ENCODE measurements at regions of chrX and their contacts with region 1.

Region 1: DNA sequence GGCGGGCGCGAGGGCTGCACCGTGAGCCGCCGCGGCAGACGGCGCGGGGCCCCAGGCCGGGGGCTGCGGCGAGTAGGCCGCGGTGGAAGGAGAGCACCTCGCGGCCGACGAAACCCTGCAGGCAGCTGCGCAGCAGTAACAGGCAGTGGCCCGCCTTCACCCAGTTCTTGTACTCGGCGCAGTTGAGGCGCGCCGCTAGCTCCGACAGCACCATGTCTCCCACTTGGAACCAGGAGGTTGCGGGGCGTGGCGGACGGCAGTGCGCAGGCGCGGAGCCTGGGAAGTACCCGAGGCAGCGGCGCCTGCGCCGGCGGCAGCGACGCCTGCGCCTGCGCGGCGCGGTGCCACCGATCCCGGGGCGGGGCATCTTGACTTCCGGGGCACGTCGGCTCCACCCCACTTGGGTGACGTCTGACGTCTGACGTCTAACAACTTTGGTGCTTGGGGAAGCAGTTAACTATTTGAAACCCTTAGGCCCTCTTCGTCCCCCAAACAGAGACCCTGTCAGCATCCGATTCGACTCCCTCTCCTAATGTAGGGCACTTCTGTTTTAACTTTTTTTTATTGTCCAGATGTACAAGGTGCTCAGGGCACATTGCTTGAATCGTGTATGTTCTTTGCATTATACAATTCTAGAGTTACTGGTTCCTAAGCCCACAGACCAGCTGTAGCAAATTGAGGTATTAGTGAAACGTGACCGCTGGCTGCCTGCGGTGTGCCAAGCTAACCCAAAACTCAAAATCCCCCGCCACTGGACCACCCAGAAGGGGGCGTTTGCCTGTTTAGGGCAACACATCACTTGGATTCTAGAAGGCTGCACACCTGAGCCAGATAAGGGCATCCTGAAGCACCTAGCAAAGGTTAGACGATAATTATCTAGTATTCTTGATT is at the start of gene CXorf38:
- DNase-seq: peak; percentile 85 to 99 (median 92)
- ATAC-seq: peak; percentile 71
- H3K4me3 ChIP-seq: peak within 1 kb of the TSS; percentile 80
- H3K4me3 Mint-ChIP-seq: peak within 1 kb of the TSS; percentile 98
- H3K27ac ChIP-seq: peak within 1 kb of the TSS; percentile 81 to 90
- H3K27ac Mint-ChIP-seq: peak within 1 kb of the TSS; percentile 91
- H3K4me1 ChIP-seq: peaks cover 26% of the 10 kb centered on the region
- H3K4me1 Mint-ChIP-seq: peaks cover 40% of the 10 kb centered on the region
- H3K27me3 ChIP-seq: no peaks in the 10 kb centered on the region
- H3K27me3 Mint-ChIP-seq: no peaks in the 10 kb centered on the region
- CTCF ChIP-seq: no peak
- total RNA-seq, gene CXorf38: 9.4 to 10.4 TPM

Region 2: DNA sequence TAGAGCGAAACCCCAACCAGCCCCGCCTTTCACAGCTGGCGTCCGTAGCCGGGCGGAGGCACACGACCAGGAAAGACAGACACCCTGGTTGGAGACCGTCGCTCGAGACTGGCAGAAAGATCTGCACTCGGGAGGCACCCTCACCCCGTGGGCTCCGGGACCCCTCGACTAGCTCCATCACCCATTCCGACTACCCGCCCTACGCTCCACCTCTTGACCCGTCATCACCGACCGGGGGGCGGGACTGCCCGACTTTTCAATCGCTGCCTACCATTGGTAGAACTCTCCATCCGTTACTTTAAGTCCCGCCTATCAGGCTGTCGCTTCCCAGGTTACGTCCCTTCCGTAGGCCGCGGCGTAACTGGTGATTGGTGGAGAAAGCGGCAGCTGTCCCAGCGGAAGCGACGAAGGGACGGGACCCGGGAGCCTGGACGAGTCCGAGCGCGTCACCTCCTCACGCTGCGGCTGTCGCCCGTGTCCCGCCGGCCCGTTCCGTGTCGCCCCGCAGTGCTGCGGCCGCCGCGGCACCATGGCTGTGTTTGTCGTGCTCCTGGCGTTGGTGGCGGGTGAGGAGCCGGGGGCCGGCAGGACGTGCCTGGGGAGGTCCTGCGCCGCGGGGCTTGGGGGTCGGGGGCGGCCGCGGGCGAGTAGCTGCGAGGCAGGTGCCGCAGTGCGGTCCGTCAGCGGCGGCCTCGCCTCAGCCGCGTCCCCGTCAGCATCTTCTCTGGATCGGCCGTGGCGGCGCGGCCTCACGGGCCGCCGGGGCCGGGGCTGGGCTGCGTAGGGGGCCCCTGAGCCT is 66.8 kb before region 1 on chrX and contains the start of gene ATP6AP2:
- CTCF ChIA-PET with region 1: interaction called, 3 read pairs
- POLR2A ChIA-PET with region 1: interaction called, 7 read pairs
- intact Hi-C with region 1: loop called (anchors 2 to 10 kb)
- DNase-seq: peak; percentile 75 to 95 (median 84)
- ATAC-seq: peak; percentile 94
- H3K4me3 ChIP-seq: peak within 1 kb of the TSS; percentile 83
- H3K4me3 Mint-ChIP-seq: peak within 1 kb of the TSS; percentile 94
- H3K27ac ChIP-seq: peak within 1 kb of the TSS; percentile 79 to 89
- H3K27ac Mint-ChIP-seq: peak within 1 kb of the TSS; percentile 89
- H3K4me1 ChIP-seq: peaks cover 17% of the 10 kb centered on the region
- H3K4me1 Mint-ChIP-seq: peaks cover 32% of the 10 kb centered on the region
- H3K27me3 ChIP-seq: no peaks in the 10 kb centered on the region
- H3K27me3 Mint-ChIP-seq: no peaks in the 10 kb centered on the region
- CTCF ChIP-seq: no peak
- total RNA-seq, gene ATP6AP2: 73.8 to 78.7 TPM

Region 3: GRCh38 chrX:40792433-40792832 is 144.9 kb after region 1 on chrX:
- CTCF ChIA-PET with region 1: interaction called, 18 read pairs
- POLR2A ChIA-PET with region 1: interaction called, 3 read pairs
- intact Hi-C with region 1: loop called (anchors 1 kb)
- DNase-seq: no peak
- ATAC-seq: no peak
- H3K4me3 ChIP-seq: no peak overlapping the region
- H3K4me3 Mint-ChIP-seq: no peak overlapping the region
- H3K27ac ChIP-seq: no peak overlapping the region
- H3K27ac Mint-ChIP-seq: no peak overlapping the region
- H3K4me1 ChIP-seq: peaks cover 5% of the 10 kb centered on the region
- H3K4me1 Mint-ChIP-seq: peaks cover 5% of the 10 kb centered on the region
- H3K27me3 ChIP-seq: no peaks in the 10 kb centered on the region
- H3K27me3 Mint-ChIP-seq: no peaks in the 10 kb centered on the region
- CTCF ChIP-seq: no peak

Region 4: DNA sequence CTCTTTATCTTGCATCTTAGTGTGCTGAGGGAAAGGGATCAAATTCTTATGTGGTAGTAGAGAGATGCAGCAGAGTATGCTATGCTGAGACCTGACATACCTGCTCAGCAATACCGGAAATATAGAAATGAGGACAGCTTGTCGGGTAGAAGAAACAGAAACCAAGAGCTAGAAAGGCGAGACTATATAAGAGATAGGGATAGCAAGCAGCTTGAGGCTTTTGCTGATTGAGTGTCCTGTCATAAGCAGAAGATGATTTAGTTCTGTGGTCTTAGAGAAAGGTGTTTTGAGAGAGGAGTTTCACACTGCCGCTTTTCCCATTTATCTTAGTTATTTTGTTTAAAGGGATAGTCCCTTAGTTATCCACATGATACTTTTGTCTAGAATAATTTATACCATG is 469.4 kb after region 1 on chrX:
- CTCF ChIA-PET with region 1: interaction called, 4 read pairs
- POLR2A ChIA-PET with region 1: no interaction called
- intact Hi-C with region 1: loop called in 1 of 2 experiments (anchors 5 kb)
- DNase-seq: peak in 3 of 14 experiments; percentile 51 to 76 (median 64)
- ATAC-seq: peak; percentile 62
- H3K4me3 ChIP-seq: no peak overlapping the region
- H3K4me3 Mint-ChIP-seq: peak overlapping the region; percentile 64
- H3K27ac ChIP-seq: no peak overlapping the region
- H3K27ac Mint-ChIP-seq: peak overlapping the region; percentile 80
- H3K4me1 ChIP-seq: peaks cover 31% of the 10 kb centered on the region
- H3K4me1 Mint-ChIP-seq: peaks cover 74% of the 10 kb centered on the region
- H3K27me3 ChIP-seq: no peaks in the 10 kb centered on the region
- H3K27me3 Mint-ChIP-seq: no peaks in the 10 kb centered on the region
- CTCF ChIP-seq: no peak

Region 5: DNA sequence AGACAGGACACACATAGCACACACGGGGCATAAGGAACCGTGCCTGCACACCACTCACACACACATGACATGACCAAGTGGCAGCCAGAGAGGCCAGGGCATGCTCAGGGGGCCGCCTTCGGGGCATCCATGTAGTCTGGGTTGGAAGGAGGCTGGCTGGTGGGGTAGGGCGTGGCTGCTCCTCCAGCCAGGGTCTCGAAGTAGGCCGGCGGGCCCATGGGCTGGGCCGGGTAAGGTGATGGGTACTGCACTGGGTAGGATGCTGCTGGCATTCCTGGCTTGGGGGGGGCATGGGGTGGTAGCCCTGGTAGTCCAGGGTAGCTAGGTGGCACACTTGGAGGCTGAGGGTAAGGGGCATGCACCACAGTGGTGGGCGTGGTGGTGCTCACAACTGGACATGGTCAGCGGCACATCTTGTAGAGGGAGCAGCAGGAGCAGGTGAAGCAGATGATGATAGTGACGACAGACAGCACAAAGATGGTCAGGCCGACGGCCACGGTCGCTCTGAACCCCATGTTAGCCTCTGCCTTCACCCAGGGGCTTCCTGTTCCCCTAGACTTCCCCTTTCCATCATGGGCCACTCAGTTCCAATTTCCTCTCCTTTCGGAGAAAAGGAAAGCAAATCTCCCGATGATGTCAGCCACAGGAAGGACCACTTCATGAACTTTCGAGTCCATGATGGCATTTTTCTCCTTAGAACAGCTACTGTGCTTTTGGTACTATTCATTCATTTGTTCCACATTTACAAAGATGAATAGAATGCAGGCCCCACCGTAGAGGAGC is 675.5 kb after region 1 on chrX:
- CTCF ChIA-PET with region 1: no interaction called
- POLR2A ChIA-PET with region 1: no interaction called
- intact Hi-C with region 1: loop called in 1 of 2 experiments (anchors 10 kb)
- DNase-seq: no peak
- ATAC-seq: no peak
- H3K4me3 ChIP-seq: no peak overlapping the region
- H3K4me3 Mint-ChIP-seq: no peak overlapping the region
- H3K27ac ChIP-seq: no peak overlapping the region
- H3K27ac Mint-ChIP-seq: no peak overlapping the region
- H3K4me1 ChIP-seq: no peaks in the 10 kb centered on the region
- H3K4me1 Mint-ChIP-seq: no peaks in the 10 kb centered on the region
- H3K27me3 ChIP-seq: no peaks in the 10 kb centered on the region
- H3K27me3 Mint-ChIP-seq: no peaks in the 10 kb centered on the region
- CTCF ChIP-seq: no peak

Region 6: GRCh38 chrX:42096265-42096920 is 1448.8 kb after region 1 on chrX:
- CTCF ChIA-PET with region 1: no interaction called
- POLR2A ChIA-PET with region 1: no interaction called
- intact Hi-C with region 1: no loop called
- DNase-seq: no peak
- ATAC-seq: no peak
- H3K4me3 ChIP-seq: no peak overlapping the region
- H3K4me3 Mint-ChIP-seq: no peak overlapping the region
- H3K27ac ChIP-seq: no peak overlapping the region
- H3K27ac Mint-ChIP-seq: no peak overlapping the region
- H3K4me1 ChIP-seq: peaks cover 3% of the 10 kb centered on the region
- H3K4me1 Mint-ChIP-seq: peaks cover 7% of the 10 kb centered on the region
- H3K27me3 ChIP-seq: no peaks in the 10 kb centered on the region
- H3K27me3 Mint-ChIP-seq: no peaks in the 10 kb centered on the region
- CTCF ChIP-seq: no peak

Measured in CD4-positive, alpha-beta T cell (primary cell).